HEK293 (cell line): ENCODE measurements at regions of chr1 and their contacts with region 1.

Region 1: DNA sequence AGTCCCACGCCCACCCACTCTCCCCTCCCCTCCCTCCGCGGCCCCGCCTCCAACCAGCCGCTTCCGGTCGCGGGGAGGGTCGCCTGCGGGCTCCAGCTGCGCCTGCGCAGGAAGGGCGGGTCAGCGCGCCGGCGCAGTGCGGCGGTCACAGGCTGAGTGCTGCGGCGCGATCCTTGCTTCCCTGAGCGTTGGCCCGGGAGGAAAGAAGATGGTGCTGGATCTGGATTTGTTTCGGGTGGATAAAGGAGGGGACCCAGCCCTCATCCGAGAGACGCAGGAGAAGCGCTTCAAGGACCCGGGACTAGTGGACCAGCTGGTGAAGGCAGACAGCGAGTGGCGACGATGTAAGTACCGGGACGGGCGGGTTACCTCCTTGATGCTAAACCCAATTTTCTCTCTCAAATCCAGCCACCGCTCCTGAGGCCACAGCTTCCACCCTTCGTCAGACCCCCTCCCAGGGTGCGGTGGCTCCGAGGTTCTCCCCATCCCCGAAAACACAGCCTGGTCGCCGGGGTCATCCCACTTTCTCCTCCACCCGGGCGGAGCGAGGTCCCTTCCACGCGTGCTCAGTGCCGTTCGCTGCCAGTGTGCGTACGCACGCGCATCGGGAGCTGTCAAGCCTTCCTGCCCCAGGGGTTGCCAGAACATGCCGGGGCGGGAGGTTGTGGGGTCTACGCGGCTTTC is at the start of gene SARS1:
- H3K4me3 ChIP-seq: peak within 1 kb of the TSS; percentile 89
- H3K27ac ChIP-seq: peak within 1 kb of the TSS; percentile 56
- H3K4me1 ChIP-seq: peaks cover 3% of the 10 kb centered on the region; the same call in 1 of the 2 replicates
- CTCF ChIP-seq: no peak

Region 2: GRCh38 chr1:108758796-108759195 is 455.1 kb before region 1 on chr1:
- CTCF ChIA-PET with region 1: no interaction called
- POLR2A ChIA-PET with region 1: no interaction called
- H3K4me3 ChIP-seq: no peak overlapping the region
- H3K27ac ChIP-seq: no peak overlapping the region
- H3K4me1 ChIP-seq: no peaks in the 10 kb centered on the region
- CTCF ChIP-seq: no peak

Region 3: GRCh38 chr1:108963052-108963686 is 250.8 kb before region 1 on chr1 and contains the start of gene CLCC1:
- CTCF ChIA-PET with region 1: no interaction called
- POLR2A ChIA-PET with region 1: no interaction called
- H3K4me3 ChIP-seq: peak within 1 kb of the TSS; percentile 59
- H3K27ac ChIP-seq: peak within 1 kb of the TSS; percentile 74
- H3K4me1 ChIP-seq: no peaks in the 10 kb centered on the region
- CTCF ChIP-seq: no peak

Region 4: GRCh38 chr1:109201123-109201703 is 12.7 kb before region 1 on chr1:
- CTCF ChIA-PET with region 1: interaction called, 17 read pairs
- POLR2A ChIA-PET with region 1: interaction called, 4 read pairs
- H3K4me3 ChIP-seq: no peak overlapping the region
- H3K27ac ChIP-seq: no peak overlapping the region
- H3K4me1 ChIP-seq: no peaks in the 10 kb centered on the region
- CTCF ChIP-seq: no peak; the same call in 1 of the 2 replicates

Region 5: DNA sequence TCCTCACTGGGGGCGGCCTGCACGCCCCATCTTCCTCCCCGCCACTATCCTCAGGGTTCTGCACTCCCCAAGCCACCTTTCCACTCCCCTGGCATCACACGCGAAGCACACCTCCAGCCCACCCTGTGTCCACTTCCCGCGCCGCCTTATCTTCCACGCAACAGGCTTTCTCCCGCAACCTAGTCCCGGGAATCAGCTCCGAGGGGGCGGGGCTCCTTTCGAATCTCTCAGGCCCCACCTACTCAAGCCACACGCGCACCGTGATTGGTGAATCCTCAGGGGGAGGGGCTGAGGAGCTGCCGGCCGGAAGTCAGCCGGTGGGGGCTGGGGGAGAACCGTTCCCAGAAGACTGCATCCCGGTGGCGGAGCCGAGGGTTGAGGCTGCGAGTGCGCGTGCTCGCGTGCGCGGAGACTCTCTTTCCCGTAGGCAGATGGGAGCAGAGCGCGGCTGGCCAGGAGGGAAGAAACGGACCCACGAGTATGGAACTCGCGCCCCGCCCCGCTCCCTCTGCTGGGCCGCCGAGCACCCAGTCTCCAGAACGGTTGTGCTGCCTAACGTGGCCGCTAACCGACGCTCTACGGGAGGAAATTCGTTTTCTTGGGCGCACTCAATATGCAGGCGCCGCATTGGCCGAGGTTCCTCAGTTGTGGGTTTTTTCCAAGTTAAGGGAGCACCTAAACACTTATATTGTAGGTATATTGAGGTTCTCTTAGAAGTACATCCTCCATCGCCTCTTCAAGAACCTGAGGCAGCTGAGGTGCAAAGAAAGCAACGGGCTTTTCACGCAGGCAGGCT is 69.2 kb after region 1 on chr1 and contains the start of gene PSRC1:
- CTCF ChIA-PET with region 1: interaction called, 3 read pairs
- POLR2A ChIA-PET with region 1: interaction called, 10 read pairs
- H3K4me3 ChIP-seq: peak within 1 kb of the TSS; percentile 75
- H3K27ac ChIP-seq: peak within 1 kb of the TSS; percentile 70
- H3K4me1 ChIP-seq: peaks cover 3% of the 10 kb centered on the region
- CTCF ChIP-seq: peak; percentile 18; the same call in 1 of the 2 replicates